ENCODE measurements at regions of chr18 and their contacts with region 1.

Region 1: DNA sequence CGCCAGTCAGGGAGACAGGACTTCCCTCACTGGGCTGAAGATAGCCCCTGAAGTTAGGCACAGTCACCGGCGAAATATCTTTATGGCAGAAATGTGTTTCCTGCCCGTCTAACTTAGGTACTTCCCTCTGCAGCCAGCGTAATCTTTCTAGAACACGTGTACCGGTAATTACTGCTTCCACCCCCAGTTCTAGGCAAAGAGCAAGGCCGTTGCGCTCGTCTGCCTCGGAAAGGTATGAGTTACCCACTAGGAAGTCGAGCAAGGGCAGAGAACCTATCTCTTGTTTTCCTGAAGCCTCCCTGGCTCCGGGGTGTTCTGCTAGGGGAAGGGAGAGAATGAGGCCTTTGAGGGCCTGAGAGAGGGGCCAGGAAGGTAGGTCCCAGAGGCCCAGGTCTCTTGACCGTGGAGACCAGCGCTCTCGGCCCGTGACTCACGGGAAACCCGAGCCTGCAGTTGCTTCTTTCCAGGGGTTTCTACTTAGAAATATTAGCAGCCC is 70.0 kb downstream of the TWSG1 start:
- DNase-seq: peak; percentile 94
- H3K4me3 ChIP-seq: peak overlapping the region in 1 of 3 experiments; percentile 10
- H3K27ac ChIP-seq: peak overlapping the region; percentile 99
- H3K4me1 ChIP-seq: peaks cover 37% of the 10 kb centered on the region
- H3K27me3 ChIP-seq: no peaks in the 10 kb centered on the region
- CTCF ChIP-seq: no peak
- POLR2A ChIP-seq: peak; percentile 69

Region 2: DNA sequence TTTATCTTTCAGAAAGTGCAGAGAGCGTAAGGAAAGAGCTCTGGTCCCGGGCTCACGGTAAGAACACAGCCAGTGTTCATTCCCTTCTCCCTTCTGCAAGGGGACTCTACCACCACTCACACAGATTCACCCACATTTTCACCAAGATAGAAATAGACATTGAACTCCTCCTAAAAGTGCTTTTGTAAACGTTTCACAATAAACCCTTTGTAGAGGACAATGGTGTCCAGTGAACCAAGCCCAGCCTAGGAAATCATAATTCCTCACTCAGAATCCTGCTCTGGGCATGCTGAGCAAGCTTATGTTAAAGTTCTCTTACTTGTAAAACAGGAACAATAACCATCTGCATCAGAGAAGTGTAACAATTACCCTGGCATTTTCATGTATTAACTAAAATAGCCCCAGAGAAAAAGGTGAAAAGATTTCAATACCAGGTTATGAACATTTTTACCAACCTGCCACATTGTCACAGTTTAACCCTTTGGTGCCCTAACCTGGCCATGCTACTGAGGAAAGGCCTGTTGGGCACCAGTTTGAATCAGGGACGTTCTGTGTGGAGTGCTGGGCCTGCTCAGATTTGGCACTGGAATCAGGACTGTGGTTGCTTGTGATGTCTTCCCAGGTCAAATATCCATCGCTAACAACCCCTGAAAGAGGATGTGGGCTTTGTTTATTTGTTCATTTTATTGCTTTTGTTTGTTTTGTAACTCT is 324.6 kb before region 1 on chr18:
- CTCF ChIA-PET with region 1: no interaction called
- POLR2A ChIA-PET with region 1: no interaction called
- dilution Hi-C with region 1: no loop called
- intact Hi-C with region 1: loop called (anchors 10 kb)
- DNase-seq: no peak
- H3K4me3 ChIP-seq: no peak overlapping the region
- H3K27ac ChIP-seq: no peak overlapping the region
- H3K4me1 ChIP-seq: no peaks in the 10 kb centered on the region
- H3K27me3 ChIP-seq: no peaks in the 10 kb centered on the region
- CTCF ChIP-seq: no peak
- POLR2A ChIP-seq: no peak

Region 3: GRCh38 chr18:9334329-9334972 is 70.2 kb before region 1 on chr18 and contains the start of gene TWSG1:
- CTCF ChIA-PET with region 1: no interaction called
- POLR2A ChIA-PET with region 1: no interaction called
- dilution Hi-C with region 1: no loop called
- intact Hi-C with region 1: loop called (anchors 2 kb)
- DNase-seq: peak; percentile 93
- H3K4me3 ChIP-seq: peak within 1 kb of the TSS; percentile 77 to 88 (median 87)
- H3K27ac ChIP-seq: peak within 1 kb of the TSS; percentile 71
- H3K4me1 ChIP-seq: peaks cover 3% of the 10 kb centered on the region
- H3K27me3 ChIP-seq: no peaks in the 10 kb centered on the region
- CTCF ChIP-seq: peak in 1 of 2 donors; percentile 65
- POLR2A ChIP-seq: peak; percentile 65
- total RNA-seq, gene TWSG1: 57.4 and 69.6 TPM in 2 replicates

Region 4: GRCh38 chr18:9366192-9366591 is 38.4 kb before region 1 on chr18:
- CTCF ChIA-PET with region 1: interaction called, 14 read pairs
- POLR2A ChIA-PET with region 1: no interaction called
- dilution Hi-C with region 1: no loop called
- intact Hi-C with region 1: no loop called
- DNase-seq: peak; percentile 79
- H3K4me3 ChIP-seq: no peak overlapping the region
- H3K27ac ChIP-seq: no peak overlapping the region
- H3K4me1 ChIP-seq: peaks cover 7% of the 10 kb centered on the region
- H3K27me3 ChIP-seq: no peaks in the 10 kb centered on the region
- CTCF ChIP-seq: peak; percentile 47 to 52
- POLR2A ChIP-seq: no peak

Region 5: GRCh38 chr18:9417073-9417841 is 12.6 kb after region 1 on chr18:
- CTCF ChIA-PET with region 1: interaction called, 4 read pairs
- POLR2A ChIA-PET with region 1: no interaction called
- dilution Hi-C with region 1: no loop called
- intact Hi-C with region 1: loop called (anchors 1 kb)
- DNase-seq: peak; percentile 69
- H3K4me3 ChIP-seq: no peak overlapping the region
- H3K27ac ChIP-seq: peak overlapping the region; percentile 21
- H3K4me1 ChIP-seq: peaks cover 22% of the 10 kb centered on the region
- H3K27me3 ChIP-seq: no peaks in the 10 kb centered on the region
- CTCF ChIP-seq: no peak
- POLR2A ChIP-seq: no peak

Region 6: GRCh38 chr18:9474983-9475642 is 70.5 kb after region 1 on chr18 and contains the start of gene RALBP1:
- CTCF ChIA-PET with region 1: no interaction called
- POLR2A ChIA-PET with region 1: no interaction called
- dilution Hi-C with region 1: no loop called
- intact Hi-C with region 1: loop called (anchors 1 kb)
- DNase-seq: peak; percentile 100
- H3K4me3 ChIP-seq: peak within 1 kb of the TSS; percentile 90 to 100 (median 91)
- H3K27ac ChIP-seq: peak within 1 kb of the TSS; percentile 74
- H3K4me1 ChIP-seq: peaks cover 14% of the 10 kb centered on the region
- H3K27me3 ChIP-seq: no peaks in the 10 kb centered on the region
- CTCF ChIP-seq: peak in 1 of 2 donors; percentile 11
- POLR2A ChIP-seq: peak; percentile 93
- total RNA-seq, gene RALBP1: 63.5 and 68.4 TPM in 2 replicates